ENCODE measurements at regions of chr3 and their contacts with region 1.

Region 1: DNA sequence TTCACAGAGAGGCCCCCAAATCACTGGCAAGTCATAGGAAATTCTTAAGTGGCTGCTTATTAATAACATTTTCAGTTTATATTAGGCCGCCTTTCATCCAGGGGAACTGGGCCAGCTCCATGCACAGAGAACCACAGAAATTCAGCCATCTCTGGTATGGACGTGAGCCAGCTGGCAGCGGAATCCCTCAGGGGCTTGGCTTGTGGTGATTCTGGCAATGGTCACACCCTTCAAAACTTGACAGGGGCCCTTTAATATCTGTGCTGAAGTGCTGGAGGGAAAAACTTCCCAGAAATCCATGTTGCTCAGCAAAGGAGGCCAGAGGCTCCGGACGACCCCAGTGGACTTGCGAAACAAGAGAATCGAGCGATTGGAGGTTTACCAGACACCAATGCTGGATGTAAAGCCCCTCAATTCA is 11.3 kb downstream of the PRICKLE2 start:
- DNase-seq: peak in 1 of 2 experiments; percentile 67
- H3K4me3 ChIP-seq: no peak overlapping the region
- H3K27ac ChIP-seq: no peak overlapping the region
- H3K4me1 ChIP-seq: peaks cover 11% of the 10 kb centered on the region
- H3K27me3 ChIP-seq: no peaks in the 10 kb centered on the region
- CTCF ChIP-seq: no peak

Region 2: DNA sequence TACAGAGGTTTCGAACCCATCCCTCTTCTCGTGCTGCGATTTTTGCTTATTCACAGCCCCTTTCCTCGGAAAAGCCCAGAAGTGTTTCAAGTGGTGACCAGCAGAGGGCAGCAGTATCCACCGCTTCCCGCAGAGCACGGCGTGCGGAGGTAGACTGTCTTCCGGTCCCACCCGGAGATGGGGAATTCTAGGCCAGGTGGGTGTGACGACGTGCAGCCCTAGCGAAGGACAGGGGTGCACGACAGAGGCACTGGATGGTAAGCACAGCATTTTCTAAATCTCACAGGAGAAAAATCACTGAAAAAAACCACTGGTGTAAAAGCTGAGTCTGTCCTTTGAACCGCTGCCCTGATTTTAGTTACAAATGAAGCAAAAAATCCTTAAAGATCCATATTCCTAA is 183.2 kb before region 1 on chr3:
- CTCF ChIA-PET with region 1: no interaction called
- POLR2A ChIA-PET with region 1: no interaction called
- intact Hi-C with region 1: loop called (anchors 10 kb)
- DNase-seq: peak; percentile 59 to 71
- H3K4me3 ChIP-seq: peak overlapping the region; percentile 42; the same call in 1 of the 2 replicates
- H3K27ac ChIP-seq: no peak overlapping the region
- H3K4me1 ChIP-seq: no peaks in the 10 kb centered on the region; the same call in 1 of the 2 replicates
- H3K27me3 ChIP-seq: no peaks in the 10 kb centered on the region
- CTCF ChIP-seq: peak; percentile 87

Region 3: DNA sequence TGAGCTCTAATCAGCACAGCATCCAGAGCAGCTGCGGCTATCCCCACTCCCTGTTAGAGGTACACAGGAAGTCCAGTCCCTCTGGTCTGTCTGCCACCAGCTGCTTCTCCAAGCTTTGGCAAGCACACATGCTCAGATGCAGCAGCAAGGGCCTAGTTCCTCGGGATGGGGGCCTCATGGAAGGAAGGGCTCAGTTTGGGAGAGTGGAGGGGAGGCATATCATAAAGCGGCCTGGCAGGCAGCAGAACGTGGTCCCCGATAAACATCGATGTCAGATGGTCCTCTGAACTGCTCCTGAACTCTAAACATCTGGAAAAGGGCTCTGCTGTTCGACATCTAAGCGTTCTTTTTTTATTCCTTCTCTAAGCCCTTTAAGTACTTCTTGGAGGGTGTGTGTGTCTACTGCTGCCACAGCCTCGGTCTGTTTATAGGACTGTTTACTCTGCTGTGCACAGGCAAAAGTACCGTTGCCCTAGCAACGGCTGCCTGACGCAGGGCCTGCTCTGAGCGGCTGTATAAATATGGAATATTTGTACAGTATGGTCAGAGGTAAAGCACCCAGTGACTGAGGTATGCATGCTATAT is 63.3 kb before region 1 on chr3:
- CTCF ChIA-PET with region 1: no interaction called
- POLR2A ChIA-PET with region 1: interaction called, 6 read pairs
- intact Hi-C with region 1: loop called (anchors 10 kb)
- DNase-seq: peak in 1 of 2 experiments; percentile 32
- H3K4me3 ChIP-seq: no peak overlapping the region
- H3K27ac ChIP-seq: no peak overlapping the region
- H3K4me1 ChIP-seq: no peaks in the 10 kb centered on the region
- H3K27me3 ChIP-seq: no peaks in the 10 kb centered on the region
- CTCF ChIP-seq: no peak

Region 4: GRCh38 chr3:64187065-64187959 is 26.7 kb before region 1 on chr3:
- CTCF ChIA-PET with region 1: no interaction called
- POLR2A ChIA-PET with region 1: no interaction called
- intact Hi-C with region 1: loop called (anchors 1 kb)
- DNase-seq: peak; percentile 46 to 68
- H3K4me3 ChIP-seq: no peak overlapping the region
- H3K27ac ChIP-seq: peak overlapping the region; percentile 29; the same call in 1 of the 2 replicates
- H3K4me1 ChIP-seq: peaks cover 50% of the 10 kb centered on the region
- H3K27me3 ChIP-seq: no peaks in the 10 kb centered on the region
- CTCF ChIP-seq: no peak

Region 5: GRCh38 chr3:65313666-65314065 is 1099.7 kb after region 1 on chr3:
- CTCF ChIA-PET with region 1: no interaction called
- POLR2A ChIA-PET with region 1: interaction called, 15 read pairs
- intact Hi-C with region 1: no loop called
- DNase-seq: no peak
- H3K4me3 ChIP-seq: no peak overlapping the region
- H3K27ac ChIP-seq: no peak overlapping the region
- H3K4me1 ChIP-seq: no peaks in the 10 kb centered on the region
- H3K27me3 ChIP-seq: no peaks in the 10 kb centered on the region
- CTCF ChIP-seq: no peak

Measured in PC-9 (cell line).